Activated CD8-positive, alpha-beta T cell treated with anti-CD3 and anti-CD28 coated beads, Interleukin-2, amount 10 ng/mL, durations not matched to agents 7 days and 5 days (primary cell): ENCODE measurements at regions of chr20 and their contacts with region 1.

Region 1: GRCh38 chr20:38748097-38748860 is at the start of gene ACTR5:
- DNase-seq: peak; percentile 97
- ATAC-seq: peak; percentile 92
- H3K4me3 Mint-ChIP-seq: peak within 1 kb of the TSS; percentile 93
- H3K27ac Mint-ChIP-seq: peak within 1 kb of the TSS; percentile 97
- H3K4me1 Mint-ChIP-seq: peaks cover 29% of the 10 kb centered on the region
- H3K27me3 Mint-ChIP-seq: peaks cover 5% of the 10 kb centered on the region
- total RNA-seq, gene ACTR5: 8.4 to 9.2 TPM

Region 2: GRCh38 chr20:38633577-38634093 is 114.6 kb before region 1 on chr20:
- CTCF ChIA-PET with region 1: interaction called, 25 read pairs
- POLR2A ChIA-PET with region 1: no interaction called
- DNase-seq: peak; percentile 74
- ATAC-seq: peak; percentile 88
- H3K4me3 Mint-ChIP-seq: no peak overlapping the region
- H3K27ac Mint-ChIP-seq: no peak overlapping the region
- H3K4me1 Mint-ChIP-seq: peaks cover 5% of the 10 kb centered on the region
- H3K27me3 Mint-ChIP-seq: peaks cover 8% of the 10 kb centered on the region

Region 3: GRCh38 chr20:38645980-38646858 is 102.1 kb before region 1 on chr20:
- CTCF ChIA-PET with region 1: interaction called, 19 read pairs
- POLR2A ChIA-PET with region 1: no interaction called
- DNase-seq: peak; percentile 91
- ATAC-seq: peak; percentile 95
- H3K4me3 Mint-ChIP-seq: peak overlapping the region; percentile 61
- H3K27ac Mint-ChIP-seq: no peak overlapping the region
- H3K4me1 Mint-ChIP-seq: peaks cover 10% of the 10 kb centered on the region
- H3K27me3 Mint-ChIP-seq: peaks cover 43% of the 10 kb centered on the region

Region 4: GRCh38 chr20:38658879-38659596 is 89.2 kb before region 1 on chr20:
- CTCF ChIA-PET with region 1: interaction called, 11 read pairs
- POLR2A ChIA-PET with region 1: no interaction called
- DNase-seq: peak; percentile 46
- ATAC-seq: peak; percentile 81
- H3K4me3 Mint-ChIP-seq: no peak overlapping the region
- H3K27ac Mint-ChIP-seq: no peak overlapping the region
- H3K4me1 Mint-ChIP-seq: no peaks in the 10 kb centered on the region
- H3K27me3 Mint-ChIP-seq: peaks cover 7% of the 10 kb centered on the region

Region 5: GRCh38 chr20:38730989-38731737 is 17.1 kb before region 1 on chr20:
- CTCF ChIA-PET with region 1: interaction called, 26 read pairs
- POLR2A ChIA-PET with region 1: no interaction called
- DNase-seq: peak; percentile 81
- ATAC-seq: peak; percentile 80
- H3K4me3 Mint-ChIP-seq: peak overlapping the region; percentile 26
- H3K27ac Mint-ChIP-seq: no peak overlapping the region
- H3K4me1 Mint-ChIP-seq: peaks cover 39% of the 10 kb centered on the region
- H3K27me3 Mint-ChIP-seq: peaks cover 89% of the 10 kb centered on the region

Region 6: GRCh38 chr20:38764567-38765355 is 16.5 kb after region 1 on chr20:
- CTCF ChIA-PET with region 1: interaction called, 59 read pairs
- POLR2A ChIA-PET with region 1: interaction called, 3 read pairs
- DNase-seq: peak; percentile 38
- ATAC-seq: peak; percentile 73
- H3K4me3 Mint-ChIP-seq: no peak overlapping the region
- H3K27ac Mint-ChIP-seq: no peak overlapping the region
- H3K4me1 Mint-ChIP-seq: peaks cover 20% of the 10 kb centered on the region
- H3K27me3 Mint-ChIP-seq: no peaks in the 10 kb centered on the region

Region 7: DNA sequence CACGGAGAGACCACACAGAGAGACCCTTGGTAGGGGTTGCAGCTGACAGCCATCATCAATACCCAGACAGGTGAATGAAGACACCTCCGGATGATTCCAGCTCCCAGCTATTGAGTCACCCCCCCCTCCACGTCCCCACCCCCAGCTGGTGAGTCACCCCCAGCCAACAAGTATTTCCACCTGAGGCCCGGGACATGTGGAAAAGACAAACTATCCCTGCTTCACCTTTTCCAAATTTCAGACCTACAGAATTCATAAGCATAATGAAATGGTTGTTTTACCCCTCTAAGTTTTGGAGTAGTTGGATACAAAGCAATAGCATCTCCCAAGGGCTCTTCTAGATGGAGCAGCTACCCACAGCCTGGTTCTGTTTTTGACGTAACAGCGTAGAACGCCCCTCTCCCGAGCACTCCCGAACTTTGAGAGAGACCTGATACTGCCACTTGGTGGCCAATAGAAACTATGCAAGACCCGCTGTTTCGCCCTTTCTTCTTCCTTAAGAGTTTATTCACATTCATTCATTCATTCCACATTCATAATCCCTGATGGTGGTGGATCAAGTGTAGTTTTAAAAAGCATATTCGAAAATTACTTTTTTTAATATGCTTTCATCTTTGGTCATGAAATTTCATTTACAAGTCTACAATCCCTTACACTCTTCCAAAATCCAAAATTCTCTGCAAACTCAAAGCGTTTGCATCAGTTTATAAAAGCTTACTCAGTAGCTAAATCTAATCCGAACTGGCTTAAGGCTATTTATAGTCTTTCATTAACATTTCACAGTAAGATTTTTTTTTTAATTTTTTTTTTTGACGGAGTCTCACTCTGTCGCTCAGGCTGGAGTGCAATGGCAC is 42.1 kb after region 1 on chr20:
- CTCF ChIA-PET with region 1: interaction called, 35 read pairs
- POLR2A ChIA-PET with region 1: no interaction called
- DNase-seq: peak; percentile 63
- ATAC-seq: peak; percentile 51
- H3K4me3 Mint-ChIP-seq: no peak overlapping the region
- H3K27ac Mint-ChIP-seq: no peak overlapping the region
- H3K4me1 Mint-ChIP-seq: peaks cover 21% of the 10 kb centered on the region
- H3K27me3 Mint-ChIP-seq: peaks cover 4% of the 10 kb centered on the region